GM12878 (cell line): ENCODE measurements at regions of chr4 and their contacts with region 1.

Region 1: DNA sequence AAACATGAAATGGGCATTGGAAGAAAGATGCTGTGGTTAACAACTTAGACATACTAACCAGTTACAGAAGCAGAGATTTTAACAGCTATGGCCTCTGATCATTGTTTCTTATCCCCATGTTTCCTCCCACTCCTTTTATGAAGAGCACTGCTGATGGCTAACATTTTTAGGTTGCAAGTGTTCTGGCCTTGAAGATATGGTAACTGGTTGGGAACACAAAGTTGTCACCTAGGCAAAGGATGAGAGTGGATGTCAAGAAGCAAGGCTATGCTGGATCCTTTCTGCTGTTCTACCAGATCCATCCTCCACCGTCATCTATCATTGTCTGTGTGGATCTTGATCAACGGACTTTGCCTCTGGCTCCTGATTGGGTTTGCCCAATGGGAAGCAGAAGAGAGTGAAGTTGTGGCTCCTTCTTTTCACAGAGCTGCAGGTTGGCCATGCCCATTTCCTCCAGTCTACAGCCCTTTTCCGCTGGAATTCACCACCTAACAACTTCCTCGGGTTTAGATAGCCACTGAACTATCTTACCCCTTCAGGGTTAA is 48.9 kb upstream of the SPP1 start:
- DNase-seq: no peak
- ATAC-seq: no peak
- H3K4me3 ChIP-seq: no peak overlapping the region
- H3K27ac ChIP-seq: no peak overlapping the region
- H3K4me1 ChIP-seq: no peaks in the 10 kb centered on the region
- H3K27me3 ChIP-seq: no peaks in the 10 kb centered on the region
- CTCF ChIP-seq: no peak
- EP300 ChIP-seq: no peak
- POLR2A ChIP-seq: no peak
- RAD21 ChIP-seq: no peak

Region 2: GRCh38 chr4:87433342-87433741 is 493.3 kb before region 1 on chr4:
- CTCF ChIA-PET with region 1: no interaction called
- POLR2A ChIA-PET with region 1: no interaction called
- RAD21 ChIA-PET with region 1: no interaction called
- SMC1A ChIA-PET with region 1: no interaction called
- in situ Hi-C with region 1: no loop called
- intact Hi-C with region 1: no loop called
- DNase-seq: no peak
- ATAC-seq: no peak
- H3K4me3 ChIP-seq: no peak overlapping the region
- H3K27ac ChIP-seq: no peak overlapping the region
- H3K4me1 ChIP-seq: no peaks in the 10 kb centered on the region
- H3K27me3 ChIP-seq: no peaks in the 10 kb centered on the region
- CTCF ChIP-seq: no peak
- EP300 ChIP-seq: no peak
- POLR2A ChIP-seq: no peak
- RAD21 ChIP-seq: no peak

Region 3: DNA sequence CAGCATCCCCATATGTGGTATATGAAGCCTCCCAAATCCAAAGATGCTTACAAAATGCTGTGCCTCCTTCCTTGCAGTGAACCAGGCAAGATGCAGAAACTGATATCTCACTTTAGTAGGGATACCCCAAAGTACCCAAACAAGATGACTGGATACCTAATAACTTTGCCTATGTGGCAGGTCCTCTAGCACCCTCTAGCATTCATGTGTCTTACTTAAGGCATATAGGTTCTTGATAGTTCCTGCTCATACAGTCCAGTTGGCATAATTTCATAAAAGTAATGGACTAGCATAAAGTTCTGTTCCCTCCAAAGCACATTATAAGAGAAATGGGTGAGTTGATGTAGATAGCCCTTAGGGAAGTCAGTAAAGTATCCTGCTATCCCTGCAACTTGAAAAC is 12.1 kb after region 1 on chr4:
- CTCF ChIA-PET with region 1: no interaction called
- POLR2A ChIA-PET with region 1: no interaction called
- RAD21 ChIA-PET with region 1: no interaction called
- SMC1A ChIA-PET with region 1: no interaction called
- in situ Hi-C with region 1: no loop called
- intact Hi-C with region 1: loop called (anchors 1 kb)
- DNase-seq: no peak
- ATAC-seq: no peak
- H3K4me3 ChIP-seq: no peak overlapping the region
- H3K27ac ChIP-seq: no peak overlapping the region
- H3K4me1 ChIP-seq: no peaks in the 10 kb centered on the region
- H3K27me3 ChIP-seq: no peaks in the 10 kb centered on the region
- CTCF ChIP-seq: no peak
- EP300 ChIP-seq: no peak
- POLR2A ChIP-seq: no peak
- RAD21 ChIP-seq: no peak